ENCODE measurements at regions of chr7 and their contacts with region 1.

Region 1: GRCh38 chr7:151110941-151111645 is 24.8 kb downstream of the AGAP3 start:
- DNase-seq: peak; percentile 76
- H3K4me3 Mint-ChIP-seq: no peak overlapping the region
- H3K27ac Mint-ChIP-seq: no peak overlapping the region
- H3K4me1 Mint-ChIP-seq: peaks cover 25% of the 10 kb centered on the region
- H3K27me3 Mint-ChIP-seq: no peaks in the 10 kb centered on the region
- CTCF ChIP-seq: peak; percentile 90

Region 2: GRCh38 chr7:150778738-150779301 is 332.3 kb before region 1 on chr7:
- CTCF ChIA-PET with region 1: interaction called, 5 read pairs
- POLR2A ChIA-PET with region 1: no interaction called
- intact Hi-C with region 1: loop called (anchors 5 kb)
- DNase-seq: peak; percentile 75
- H3K4me3 Mint-ChIP-seq: no peak overlapping the region
- H3K27ac Mint-ChIP-seq: no peak overlapping the region
- H3K4me1 Mint-ChIP-seq: no peaks in the 10 kb centered on the region
- H3K27me3 Mint-ChIP-seq: peaks cover 23% of the 10 kb centered on the region
- CTCF ChIP-seq: peak; percentile 76

Region 3: GRCh38 chr7:150918378-150918777 is 192.7 kb before region 1 on chr7:
- CTCF ChIA-PET with region 1: no interaction called
- POLR2A ChIA-PET with region 1: no interaction called
- intact Hi-C with region 1: no loop called
- DNase-seq: no peak
- H3K4me3 Mint-ChIP-seq: no peak overlapping the region
- H3K27ac Mint-ChIP-seq: no peak overlapping the region
- H3K4me1 Mint-ChIP-seq: no peaks in the 10 kb centered on the region
- H3K27me3 Mint-ChIP-seq: peaks cover 67% of the 10 kb centered on the region
- CTCF ChIP-seq: no peak

Region 4: GRCh38 chr7:150971242-150972022 is 139.7 kb before region 1 on chr7:
- CTCF ChIA-PET with region 1: interaction called, 12 read pairs
- POLR2A ChIA-PET with region 1: no interaction called
- intact Hi-C with region 1: loop called (anchors 5 kb)
- DNase-seq: no peak
- H3K4me3 Mint-ChIP-seq: no peak overlapping the region
- H3K27ac Mint-ChIP-seq: no peak overlapping the region
- H3K4me1 Mint-ChIP-seq: no peaks in the 10 kb centered on the region
- H3K27me3 Mint-ChIP-seq: peaks cover 22% of the 10 kb centered on the region
- CTCF ChIP-seq: no peak

Region 5: GRCh38 chr7:151057989-151058780 is 52.9 kb before region 1 on chr7:
- CTCF ChIA-PET with region 1: interaction called, 42 read pairs
- POLR2A ChIA-PET with region 1: interaction called, 80 read pairs
- intact Hi-C with region 1: loop called (anchors 1 kb)
- DNase-seq: peak; percentile 99
- H3K4me3 Mint-ChIP-seq: peak overlapping the region; percentile 97
- H3K27ac Mint-ChIP-seq: peak overlapping the region; percentile 87
- H3K4me1 Mint-ChIP-seq: peaks cover 34% of the 10 kb centered on the region
- H3K27me3 Mint-ChIP-seq: no peaks in the 10 kb centered on the region
- CTCF ChIP-seq: no peak

Region 6: DNA sequence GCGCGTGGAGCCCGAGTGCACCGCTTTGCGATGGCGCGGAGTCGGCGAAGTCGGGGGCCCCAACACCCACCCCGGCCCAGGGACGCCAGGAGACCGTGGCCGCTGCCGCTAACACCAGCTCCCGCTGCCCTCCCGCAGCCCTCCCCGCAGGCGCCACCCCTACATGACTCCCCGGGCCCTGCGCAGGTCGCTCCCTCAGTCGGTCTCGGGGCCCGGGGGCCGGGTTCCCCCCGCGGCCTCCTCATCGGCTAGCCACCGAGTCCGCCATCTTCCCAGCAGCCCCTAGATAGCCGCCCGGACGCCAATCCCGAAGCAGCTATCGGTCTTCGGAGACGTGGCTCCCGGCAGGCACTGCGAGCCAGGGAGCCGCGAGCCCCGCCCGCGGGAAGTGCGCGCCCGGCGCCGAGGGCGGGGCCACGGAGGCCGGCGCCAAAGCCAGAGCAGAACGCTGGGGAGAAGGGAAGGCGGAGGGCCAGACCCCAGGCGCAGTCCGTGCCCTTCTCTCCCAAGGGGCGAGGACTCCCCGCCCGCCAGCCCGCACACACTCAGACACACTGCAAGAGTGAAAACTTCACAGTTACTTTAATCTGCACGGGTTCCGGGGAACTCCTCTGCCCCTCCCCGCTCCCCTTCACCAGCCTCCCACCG is 30.4 kb before region 1 on chr7 and contains the start of gene FASTK:
- CTCF ChIA-PET with region 1: interaction called, 315 read pairs
- POLR2A ChIA-PET with region 1: interaction called, 128 read pairs
- intact Hi-C with region 1: no loop called
- DNase-seq: peak; percentile 91
- H3K4me3 Mint-ChIP-seq: peak within 1 kb of the TSS; percentile 91
- H3K27ac Mint-ChIP-seq: peak within 1 kb of the TSS; percentile 83
- H3K4me1 Mint-ChIP-seq: peaks cover 32% of the 10 kb centered on the region
- H3K27me3 Mint-ChIP-seq: no peaks in the 10 kb centered on the region
- CTCF ChIP-seq: no peak
- total RNA-seq, gene FASTK: 79.3 and 83.6 TPM in 2 replicates

Region 7: GRCh38 chr7:151095123-151095797 is 15.8 kb before region 1 on chr7:
- CTCF ChIA-PET with region 1: interaction called, 315 read pairs
- POLR2A ChIA-PET with region 1: interaction called, 3 read pairs
- intact Hi-C with region 1: no loop called
- DNase-seq: no peak
- H3K4me3 Mint-ChIP-seq: no peak overlapping the region
- H3K27ac Mint-ChIP-seq: no peak overlapping the region
- H3K4me1 Mint-ChIP-seq: peaks cover 8% of the 10 kb centered on the region
- H3K27me3 Mint-ChIP-seq: no peaks in the 10 kb centered on the region
- CTCF ChIP-seq: no peak